Dorsolateral prefrontal cortex (tissue), 120 donors: ENCODE measurements at regions of chr14 and their contacts with region 1.

Region 1: GRCh38 chr14:94036313-94037050 is 10.3 kb downstream of the OTUB2 start:
- DNase-seq: peak in 8 of 10 donors; percentile 51 to 77 (median 65)
- H3K4me3 ChIP-seq: no peak overlapping the region
- H3K27ac ChIP-seq: peak overlapping the region in 21 of 59 donors; percentile 3 to 64 (median 47)
- H3K27me3 ChIP-seq: no peaks in the 10 kb centered on the region
- CTCF ChIP-seq: peak; percentile 42 to 87 (median 76)

Region 2: GRCh38 chr14:94115058-94115591 is 78.6 kb after region 1 on chr14:
- intact Hi-C with region 1: no loop called
- DNase-seq: peak in 2 of 10 donors; percentile 6 to 32
- H3K4me3 ChIP-seq: peak overlapping the region in 2 of 59 donors; percentile 7 to 35
- H3K27ac ChIP-seq: peak overlapping the region in 12 of 59 donors; percentile 6 to 70 (median 34)
- H3K27me3 ChIP-seq: no peaks in the 10 kb centered on the region
- CTCF ChIP-seq: no peak

Region 3: DNA sequence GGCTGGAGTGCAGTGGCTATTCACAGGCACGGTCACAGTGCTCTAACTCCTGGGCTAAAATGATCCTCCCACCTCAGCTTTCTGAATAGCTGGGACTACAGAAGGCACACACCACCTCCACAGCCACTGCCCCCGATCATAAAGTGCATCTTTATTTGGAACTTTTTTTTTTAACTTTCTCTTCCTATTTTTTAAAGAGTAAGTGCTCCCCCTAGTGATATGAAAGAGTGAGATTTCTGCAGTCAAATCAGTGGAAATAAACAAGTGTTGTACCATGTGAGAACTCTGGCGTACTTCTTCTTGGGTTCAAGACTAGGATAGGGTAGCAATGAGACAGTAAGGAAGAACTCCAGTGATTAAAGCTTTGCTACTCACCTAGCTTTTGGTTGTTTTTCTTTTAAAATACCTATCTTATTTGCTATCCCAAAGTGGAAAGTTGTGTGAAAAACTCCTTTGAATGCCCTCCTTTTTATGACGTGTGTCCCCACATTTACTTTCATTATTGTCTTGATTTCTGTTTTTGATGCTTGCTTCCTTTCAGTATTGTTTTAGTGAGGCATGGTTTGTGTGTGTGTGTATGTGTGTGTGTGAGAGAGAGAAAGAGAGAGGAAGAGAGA is 144.3 kb after region 1 on chr14:
- intact Hi-C with region 1: loop called in 1 of 2 experiments (anchors 5 kb)
- DNase-seq: no peak
- H3K4me3 ChIP-seq: peak overlapping the region in 37 of 59 donors; percentile 1 to 52 (median 32)
- H3K27ac ChIP-seq: peak overlapping the region in 2 of 59 donors; percentile 21 to 24
- H3K27me3 ChIP-seq: peaks cover 0 to 6% (median 0%) of the 10 kb centered on the region in 45 donors
- CTCF ChIP-seq: peak; percentile 35 to 90 (median 73)